Naive thymus-derived CD8-positive, alpha-beta T cell (primary cell): ENCODE measurements at regions of chr3 and their contacts with region 1.

Region 1: DNA sequence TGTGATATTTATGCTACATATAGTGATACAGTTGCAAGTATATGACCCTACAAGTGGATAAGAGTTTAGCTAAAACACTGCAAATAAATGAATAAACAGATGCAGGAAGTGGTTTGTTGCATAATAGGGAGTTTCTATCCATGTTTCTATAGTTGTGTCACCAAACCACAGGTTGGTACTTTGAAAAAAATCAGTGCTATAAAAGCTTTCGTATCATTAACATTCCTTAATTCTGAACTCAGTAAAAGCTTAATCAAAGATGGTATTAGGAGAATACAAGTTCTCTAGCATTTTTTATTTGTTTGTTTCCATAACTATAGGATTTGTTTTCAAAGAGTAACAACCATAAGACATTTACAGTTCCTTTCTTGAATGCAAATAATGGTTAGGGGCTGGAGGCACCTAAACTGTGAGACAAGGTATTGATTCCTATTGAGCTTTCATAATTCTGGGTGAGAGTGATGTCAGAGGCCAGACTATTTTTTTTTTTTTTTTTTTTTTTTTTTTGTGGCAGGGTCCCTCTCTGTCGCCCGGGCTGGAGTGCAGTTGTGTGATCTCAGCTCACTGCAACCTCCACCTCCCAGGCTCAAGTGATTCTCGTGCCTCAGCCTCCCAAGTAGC is 29.6 kb downstream of the CPOX start:
- DNase-seq: peak in 5 of 10 donors; percentile 6 to 61 (median 38)
- ATAC-seq: peak; percentile 31 to 72
- H3K4me3 Mint-ChIP-seq: peak overlapping the region; percentile 33 to 78 (median 58)
- H3K27ac Mint-ChIP-seq: peak overlapping the region; percentile 82 to 98 (median 94)
- H3K4me1 Mint-ChIP-seq: peaks cover 12 to 66% (median 57%) of the 10 kb centered on the region in 4 donors
- H3K27me3 Mint-ChIP-seq: no peaks in the 10 kb centered on the region

Region 2: DNA sequence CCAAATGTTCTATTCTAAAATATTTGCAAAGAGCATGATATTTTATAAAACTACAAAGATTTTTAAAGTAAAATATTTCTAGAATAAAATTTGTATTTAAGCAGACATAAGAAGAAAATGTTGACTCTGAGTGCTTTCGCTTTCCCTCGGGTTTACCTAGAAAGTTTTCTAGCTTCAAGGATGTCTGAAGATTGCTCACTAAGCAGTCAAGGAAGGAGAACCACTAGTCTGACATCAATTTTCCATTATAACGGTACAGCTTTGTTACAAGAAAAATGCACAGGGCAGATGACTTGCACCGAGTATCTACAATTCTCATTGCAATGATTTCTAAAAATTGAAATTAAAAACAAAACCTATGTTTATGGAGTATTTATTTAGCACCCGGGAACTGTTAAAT is 17.8 kb before region 1 on chr3:
- POLR2A ChIA-PET with region 1: interaction called, 10 read pairs
- DNase-seq: no peak
- ATAC-seq: no peak
- H3K4me3 Mint-ChIP-seq: peak overlapping the region in 1 of 10 donors; percentile 36
- H3K27ac Mint-ChIP-seq: no peak overlapping the region
- H3K4me1 Mint-ChIP-seq: peaks cover 0 to 9% (median 3%) of the 10 kb centered on the region in 4 donors
- H3K27me3 Mint-ChIP-seq: no peaks in the 10 kb centered on the region

Region 3: GRCh38 chr3:98581474-98581873 is 17.7 kb after region 1 on chr3:
- POLR2A ChIA-PET with region 1: no interaction called
- DNase-seq: no peak
- ATAC-seq: no peak
- H3K4me3 Mint-ChIP-seq: no peak overlapping the region
- H3K27ac Mint-ChIP-seq: peak overlapping the region in 4 of 10 donors; percentile 8 to 36 (median 24)
- H3K4me1 Mint-ChIP-seq: peaks cover 0 to 28% (median 5%) of the 10 kb centered on the region in 4 donors
- H3K27me3 Mint-ChIP-seq: no peaks in the 10 kb centered on the region